ENCODE measurements at regions of chr17 and their contacts with region 1.

Region 1: DNA sequence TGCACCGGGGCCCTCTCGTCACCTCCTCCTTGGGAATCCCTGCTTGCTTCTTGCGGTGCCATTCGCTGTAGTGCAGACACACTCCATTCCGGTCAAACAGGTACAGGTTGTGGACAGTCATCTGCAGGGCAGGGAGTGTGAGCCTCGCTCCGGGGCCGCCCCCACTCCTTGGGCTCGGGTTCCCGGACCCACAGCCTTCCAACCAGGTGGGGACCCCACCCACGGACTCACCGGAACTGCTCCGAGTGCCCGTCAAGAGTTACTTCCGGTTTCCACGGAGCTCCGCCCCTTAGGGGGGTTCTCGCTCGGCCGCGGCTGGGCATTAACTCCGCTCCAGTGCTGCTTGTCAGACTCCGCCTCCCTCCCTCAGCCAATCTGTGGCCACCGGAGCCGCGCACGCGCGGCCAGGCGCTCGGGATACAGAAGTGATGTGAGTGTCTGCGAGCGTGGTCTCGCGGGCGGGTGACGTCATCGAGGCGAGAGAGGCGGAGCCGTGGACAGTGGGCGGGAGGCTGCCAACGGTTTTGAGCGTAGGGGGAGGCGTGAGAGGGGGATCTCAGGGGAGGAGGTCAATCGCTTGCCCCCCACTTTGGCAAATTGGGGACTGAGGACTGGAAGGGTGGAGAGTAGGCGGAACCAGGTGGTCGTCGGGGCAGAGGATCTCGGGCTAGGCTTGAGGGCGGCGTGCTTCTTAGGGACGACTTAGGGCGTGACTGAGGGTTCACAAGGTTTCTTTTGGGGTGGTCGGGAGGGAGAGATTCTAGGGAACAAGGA is at the starts of genes CNTROB and TRAPPC1:
- DNase-seq: peak; percentile 96
- H3K4me3 Mint-ChIP-seq: peak within 1 kb of the TSS; percentile 91
- H3K27ac Mint-ChIP-seq: peak within 1 kb of the TSS; percentile 85
- H3K4me1 Mint-ChIP-seq: peaks cover 20% of the 10 kb centered on the region
- H3K27me3 Mint-ChIP-seq: no peaks in the 10 kb centered on the region
- CTCF ChIP-seq: no peak
- total RNA-seq, gene CNTROB: 21.8 and 28.2 TPM in 2 replicates
- total RNA-seq, gene TRAPPC1: 87.8 and 106 TPM in 2 replicates

Region 2: DNA sequence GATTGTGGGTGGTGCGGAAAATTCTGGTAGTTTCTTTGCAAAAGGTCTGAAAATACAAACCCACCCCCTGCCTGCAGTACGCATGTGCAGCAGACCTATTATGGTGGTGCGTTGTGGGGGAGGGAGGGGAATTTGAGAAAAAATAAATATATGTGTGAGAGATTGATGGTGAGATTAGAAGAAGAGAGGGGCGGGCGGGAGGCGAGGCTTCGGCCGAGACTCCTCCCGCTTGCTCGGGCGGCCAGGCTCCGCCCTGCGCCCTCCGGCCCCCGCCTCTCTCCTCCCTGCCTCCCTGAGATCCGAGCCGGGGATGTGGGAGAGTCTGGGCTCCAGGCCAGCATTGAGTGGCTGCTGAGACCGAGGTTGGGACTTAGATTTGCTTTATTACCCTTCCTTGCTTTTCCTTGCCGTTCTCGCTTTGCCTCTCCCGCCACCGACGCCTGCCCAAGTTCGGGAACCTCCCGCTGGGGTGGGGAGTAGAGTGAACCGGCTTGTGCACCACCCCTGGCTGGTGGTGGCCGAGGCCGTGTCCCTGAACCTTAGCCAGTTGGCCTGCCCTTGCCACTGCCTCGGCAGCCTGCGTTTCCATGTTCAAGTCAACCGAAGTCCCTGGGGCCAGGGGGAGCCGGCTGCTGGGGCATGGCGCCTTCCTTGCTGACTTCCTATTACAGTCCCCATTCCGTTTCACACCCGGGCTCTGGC is 44.3 kb before region 1 on chr17:
- CTCF ChIA-PET with region 1: no interaction called
- intact Hi-C with region 1: loop called (anchors 10 kb)
- DNase-seq: peak; percentile 85
- H3K4me3 Mint-ChIP-seq: no peak overlapping the region
- H3K27ac Mint-ChIP-seq: no peak overlapping the region
- H3K4me1 Mint-ChIP-seq: peaks cover 8% of the 10 kb centered on the region
- H3K27me3 Mint-ChIP-seq: no peaks in the 10 kb centered on the region
- CTCF ChIP-seq: no peak

Measured in Calu3 (cell line).